ENCODE measurements at regions of chr9 and their contacts with region 1.

Region 1: DNA sequence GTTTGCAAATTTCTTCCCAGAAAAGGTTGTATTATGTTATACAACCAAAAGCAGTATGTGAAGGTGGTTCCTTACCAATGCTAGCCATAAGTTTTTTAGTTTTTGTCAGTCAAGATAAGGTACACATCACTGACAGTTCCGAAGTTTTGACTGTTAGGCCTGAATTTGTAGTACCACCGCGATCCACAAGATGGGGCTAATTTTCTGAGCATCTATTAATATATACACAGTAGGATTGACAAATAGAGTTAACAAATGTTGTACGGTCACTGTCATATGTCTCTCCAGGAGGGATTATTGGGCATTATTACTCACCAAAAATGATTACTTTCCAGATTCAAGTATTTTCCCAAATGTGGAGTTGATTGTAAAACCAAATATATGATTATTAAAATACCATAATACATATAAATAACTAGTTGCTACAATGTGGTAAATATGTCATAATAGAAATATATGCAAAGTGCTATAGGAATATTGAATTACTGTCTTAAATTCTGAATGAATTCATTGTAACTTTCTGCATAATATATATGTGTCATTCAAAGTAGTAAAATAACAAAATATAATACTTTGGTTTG is 28.4 kb upstream of the LRRC19 start:
- DNase-seq: no peak
- H3K4me3 ChIP-seq: no peak overlapping the region
- H3K27ac ChIP-seq: no peak overlapping the region
- H3K4me1 ChIP-seq: no peaks in the 10 kb centered on the region
- H3K27me3 ChIP-seq: no peaks in the 10 kb centered on the region
- CTCF ChIP-seq: peak; percentile 87

Region 2: GRCh38 chr9:27194401-27195091 is 160.6 kb after region 1 on chr9:
- intact Hi-C with region 1: loop called (anchors 10 kb)
- DNase-seq: no peak
- H3K4me3 ChIP-seq: no peak overlapping the region
- H3K27ac ChIP-seq: peak overlapping the region; percentile 68
- H3K4me1 ChIP-seq: peaks cover 53% of the 10 kb centered on the region
- H3K27me3 ChIP-seq: no peaks in the 10 kb centered on the region
- CTCF ChIP-seq: no peak

Region 3: DNA sequence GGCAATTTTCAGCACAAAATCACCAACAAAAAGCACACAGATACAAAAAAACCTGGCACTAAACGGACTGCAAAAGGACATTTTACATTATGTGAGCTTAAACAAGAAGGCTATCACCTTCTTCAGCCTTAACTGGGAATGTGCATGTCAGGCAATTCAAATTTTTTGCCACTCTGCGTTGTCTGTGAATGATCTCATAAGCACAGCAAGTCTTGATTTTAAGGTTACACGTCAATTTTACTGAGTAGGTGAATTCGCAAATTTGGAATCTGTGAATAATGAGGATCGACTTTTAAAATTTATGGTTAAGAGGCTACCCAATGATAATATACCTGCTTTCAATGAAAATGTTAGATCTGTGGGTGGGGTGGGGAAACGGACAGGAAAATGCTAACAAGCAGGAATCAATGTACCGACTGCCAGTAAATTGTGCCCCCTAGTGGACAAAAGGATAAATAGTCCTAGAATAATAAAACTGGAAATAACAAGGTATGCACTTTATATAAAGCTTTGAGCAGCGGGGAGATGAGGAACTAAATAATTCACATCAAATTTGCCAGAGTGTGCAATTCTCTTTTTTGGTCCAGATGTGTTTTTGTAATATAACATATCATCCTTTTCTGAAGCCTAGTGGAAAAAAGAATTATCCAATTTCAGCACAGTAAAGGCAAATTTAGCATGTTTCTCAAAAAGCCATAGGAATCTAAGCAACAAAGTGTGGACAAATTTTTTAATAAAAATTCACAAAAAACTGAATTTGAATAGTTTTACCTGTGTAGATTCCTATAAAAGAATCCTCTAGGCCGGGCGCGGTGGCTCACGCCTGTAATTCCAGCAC is 242.5 kb after region 1 on chr9:
- intact Hi-C with region 1: loop called (anchors 10 kb)
- DNase-seq: no peak
- H3K4me3 ChIP-seq: peak overlapping the region; percentile 39
- H3K27ac ChIP-seq: no peak overlapping the region
- H3K4me1 ChIP-seq: peaks cover 7% of the 10 kb centered on the region
- H3K27me3 ChIP-seq: no peaks in the 10 kb centered on the region
- CTCF ChIP-seq: peak; percentile 79